Vagina (tissue), 2 donors: ENCODE measurements at regions of chr2 and their contacts with region 1.

Region 1: GRCh38 chr2:11583840-11584524 is 50.1 kb downstream of the GREB1 start:
- DNase-seq: no peak
- H3K4me3 ChIP-seq: no peak overlapping the region
- H3K27ac ChIP-seq: peak overlapping the region; percentile 66
- H3K4me1 ChIP-seq: peaks cover 26% of the 10 kb centered on the region
- H3K27me3 ChIP-seq: no peaks in the 10 kb centered on the region
- CTCF ChIP-seq: peak; percentile 41 to 87 (median 74)
- POLR2A ChIP-seq: no peak

Region 2: DNA sequence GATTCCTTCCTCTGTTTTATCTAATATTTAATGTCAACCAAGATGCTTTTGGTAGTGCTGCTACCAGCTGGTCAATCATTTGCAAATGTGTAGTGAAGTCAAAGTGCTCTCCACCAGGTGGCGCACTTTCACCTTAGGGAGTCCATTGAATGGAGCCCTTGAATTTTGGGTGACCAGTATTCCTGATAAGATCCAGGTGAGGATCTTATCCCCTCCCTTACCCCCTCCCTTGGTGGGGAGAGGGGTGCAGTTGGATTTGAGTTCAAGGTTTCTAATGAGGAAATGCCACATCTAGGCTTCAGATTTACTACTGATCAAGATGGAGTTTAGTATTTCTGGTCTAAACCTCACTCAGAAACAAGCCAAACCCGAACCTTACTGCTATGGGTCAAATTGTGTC is 106.0 kb before region 1 on chr2:
- intact Hi-C with region 1: loop called (anchors 2 kb)
- DNase-seq: no peak
- H3K4me3 ChIP-seq: no peak overlapping the region
- H3K27ac ChIP-seq: no peak overlapping the region
- H3K4me1 ChIP-seq: peaks cover 8% of the 10 kb centered on the region
- H3K27me3 ChIP-seq: no peaks in the 10 kb centered on the region
- CTCF ChIP-seq: peak; percentile 80 to 97 (median 90)
- POLR2A ChIP-seq: no peak